ENCODE measurements at regions of chr9 and their contacts with region 1.

Region 1: GRCh38 chr9:99104459-99105151 is at the start of gene TGFBR1:
- DNase-seq: peak; percentile 99
- H3K4me3 Mint-ChIP-seq: peak within 1 kb of the TSS; percentile 90
- H3K27ac Mint-ChIP-seq: peak within 1 kb of the TSS; percentile 84
- H3K4me1 Mint-ChIP-seq: peaks cover 53% of the 10 kb centered on the region
- H3K27me3 Mint-ChIP-seq: no peaks in the 10 kb centered on the region
- total RNA-seq, gene TGFBR1: 29.7 and 35.3 TPM in 2 replicates

Region 2: GRCh38 chr9:98993570-98993945 is 111.0 kb before region 1 on chr9:
- intact Hi-C with region 1: no loop called
- DNase-seq: peak; percentile 70
- H3K4me3 Mint-ChIP-seq: peak overlapping the region; percentile 40
- H3K27ac Mint-ChIP-seq: peak overlapping the region; percentile 73
- H3K4me1 Mint-ChIP-seq: peaks cover 12% of the 10 kb centered on the region
- H3K27me3 Mint-ChIP-seq: peaks cover 23% of the 10 kb centered on the region

Region 3: GRCh38 chr9:99092643-99093491 is 11.7 kb before region 1 on chr9:
- intact Hi-C with region 1: loop called (anchors 1 kb)
- DNase-seq: peak; percentile 88
- H3K4me3 Mint-ChIP-seq: peak overlapping the region; percentile 74
- H3K27ac Mint-ChIP-seq: peak overlapping the region; percentile 95
- H3K4me1 Mint-ChIP-seq: peaks cover 65% of the 10 kb centered on the region
- H3K27me3 Mint-ChIP-seq: no peaks in the 10 kb centered on the region

Region 4: DNA sequence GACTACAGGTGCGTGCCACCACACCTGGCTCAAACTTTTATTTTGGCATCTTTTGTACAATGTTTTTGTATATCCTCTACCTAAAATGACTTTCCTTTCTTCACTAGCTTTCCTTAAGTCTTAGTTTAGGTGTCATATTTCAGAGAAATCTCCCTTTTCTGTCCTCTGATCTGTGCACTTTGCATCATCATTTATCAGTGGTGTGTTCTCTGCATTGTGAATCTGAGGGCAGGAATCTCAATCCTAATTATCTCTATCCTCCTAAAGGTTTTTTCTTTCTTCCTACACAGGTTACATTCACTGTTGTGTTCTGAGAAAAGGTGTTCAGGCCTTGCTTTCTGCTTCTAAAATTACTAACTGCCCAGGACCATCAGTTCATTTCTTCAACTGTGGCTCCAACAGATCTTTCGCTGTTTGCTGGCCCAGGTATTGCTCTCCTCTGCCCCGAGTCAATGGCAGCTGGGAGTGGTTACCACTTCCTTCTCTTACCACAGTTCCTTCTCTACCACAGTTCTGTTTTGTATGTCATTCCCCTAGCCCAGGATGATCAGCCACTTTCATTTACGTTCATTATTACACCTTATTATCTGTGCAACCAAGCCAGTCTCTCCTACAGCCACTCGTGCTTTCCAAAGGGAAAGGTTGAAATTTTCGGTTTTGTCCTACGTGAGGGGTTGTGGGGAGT is 14.3 kb after region 1 on chr9:
- intact Hi-C with region 1: loop called (anchors 2 kb)
- DNase-seq: peak; percentile 87
- H3K4me3 Mint-ChIP-seq: peak overlapping the region; percentile 81
- H3K27ac Mint-ChIP-seq: peak overlapping the region; percentile 90
- H3K4me1 Mint-ChIP-seq: peaks cover 57% of the 10 kb centered on the region
- H3K27me3 Mint-ChIP-seq: no peaks in the 10 kb centered on the region

Region 5: GRCh38 chr9:99221621-99222415 is 117.2 kb after region 1 on chr9 and contains the starts of genes ALG2 and SEC61B:
- intact Hi-C with region 1: loop called (anchors 5 kb)
- DNase-seq: peak; percentile 98
- H3K4me3 Mint-ChIP-seq: peak within 1 kb of the TSS; percentile 97
- H3K27ac Mint-ChIP-seq: peak within 1 kb of the TSS; percentile 99
- H3K4me1 Mint-ChIP-seq: peaks cover 51% of the 10 kb centered on the region
- H3K27me3 Mint-ChIP-seq: no peaks in the 10 kb centered on the region
- total RNA-seq, gene ALG2: 29.2 and 31.0 TPM in 2 replicates
- total RNA-seq, gene SEC61B: 169 and 170 TPM in 2 replicates

Measured in activated CD4-positive, alpha-beta T cell treated with anti-CD3 and anti-CD28 coated beads, Interleukin-2, amount 10 ng/mL, durations not matched to agents 24 days and 14 days (primary cell).